PC-9 (cell line): ENCODE measurements at regions of chr18 and their contacts with region 1.

Region 1: GRCh38 chr18:47215554-47216138 is 35.8 kb downstream of the SKOR2 start:
- DNase-seq: no peak
- H3K4me3 ChIP-seq: no peak overlapping the region
- H3K27ac ChIP-seq: no peak overlapping the region
- H3K4me1 ChIP-seq: no peaks in the 10 kb centered on the region
- H3K27me3 ChIP-seq: peaks cover 31% of the 10 kb centered on the region
- CTCF ChIP-seq: peak; percentile 72

Region 2: GRCh38 chr18:46814399-46814798 is 401.2 kb before region 1 on chr18:
- CTCF ChIA-PET with region 1: no interaction called
- POLR2A ChIA-PET with region 1: no interaction called
- intact Hi-C with region 1: no loop called
- DNase-seq: no peak
- H3K4me3 ChIP-seq: no peak overlapping the region
- H3K27ac ChIP-seq: no peak overlapping the region
- H3K4me1 ChIP-seq: no peaks in the 10 kb centered on the region
- H3K27me3 ChIP-seq: no peaks in the 10 kb centered on the region
- CTCF ChIP-seq: no peak

Region 3: GRCh38 chr18:46829947-46830346 is 385.7 kb before region 1 on chr18:
- CTCF ChIA-PET with region 1: interaction called, 10 read pairs
- POLR2A ChIA-PET with region 1: no interaction called
- intact Hi-C with region 1: no loop called
- DNase-seq: no peak
- H3K4me3 ChIP-seq: no peak overlapping the region
- H3K27ac ChIP-seq: no peak overlapping the region
- H3K4me1 ChIP-seq: no peaks in the 10 kb centered on the region
- H3K27me3 ChIP-seq: no peaks in the 10 kb centered on the region
- CTCF ChIP-seq: no peak

Region 4: GRCh38 chr18:47283476-47283875 is 67.8 kb after region 1 on chr18:
- CTCF ChIA-PET with region 1: no interaction called
- POLR2A ChIA-PET with region 1: no interaction called
- intact Hi-C with region 1: no loop called
- DNase-seq: no peak
- H3K4me3 ChIP-seq: no peak overlapping the region
- H3K27ac ChIP-seq: no peak overlapping the region
- H3K4me1 ChIP-seq: no peaks in the 10 kb centered on the region
- H3K27me3 ChIP-seq: peaks cover 36% of the 10 kb centered on the region; the same call in 1 of the 2 replicates
- CTCF ChIP-seq: peak; percentile 73

Region 5: GRCh38 chr18:47748847-47749599 is 533.4 kb after region 1 on chr18:
- CTCF ChIA-PET with region 1: interaction called, 3 read pairs
- POLR2A ChIA-PET with region 1: no interaction called
- intact Hi-C with region 1: loop called (anchors 1 kb)
- DNase-seq: peak in 1 of 2 experiments; percentile 65
- H3K4me3 ChIP-seq: no peak overlapping the region
- H3K27ac ChIP-seq: no peak overlapping the region
- H3K4me1 ChIP-seq: no peaks in the 10 kb centered on the region
- H3K27me3 ChIP-seq: peaks cover 42% of the 10 kb centered on the region
- CTCF ChIP-seq: peak; percentile 84

Region 6: GRCh38 chr18:47817795-47818077 is 602.1 kb after region 1 on chr18:
- CTCF ChIA-PET with region 1: no interaction called
- POLR2A ChIA-PET with region 1: interaction called, 10 read pairs
- intact Hi-C with region 1: no loop called
- DNase-seq: no peak
- H3K4me3 ChIP-seq: no peak overlapping the region
- H3K27ac ChIP-seq: no peak overlapping the region
- H3K4me1 ChIP-seq: no peaks in the 10 kb centered on the region
- H3K27me3 ChIP-seq: no peaks in the 10 kb centered on the region
- CTCF ChIP-seq: no peak